Mammary epithelial cell (primary cell): ENCODE measurements at regions of chr5 and their contacts with region 1.

Region 1: GRCh38 chr5:66440202-66440680 is 156.0 kb upstream of the MAST4 start:
- DNase-seq: peak; percentile 53
- H3K4me3 ChIP-seq: no peak overlapping the region
- H3K27ac ChIP-seq: no peak overlapping the region
- H3K4me1 ChIP-seq: no peaks in the 10 kb centered on the region
- H3K27me3 ChIP-seq: peaks cover 2% of the 10 kb centered on the region
- CTCF ChIP-seq: no peak

Region 2: GRCh38 chr5:66378407-66378806 is 61.8 kb before region 1 on chr5:
- CTCF ChIA-PET with region 1: no interaction called
- dilution Hi-C with region 1: loop called (anchors 5 kb)
- in situ Hi-C with region 1: no loop called
- intact Hi-C with region 1: no loop called
- DNase-seq: no peak
- H3K4me3 ChIP-seq: no peak overlapping the region
- H3K27ac ChIP-seq: no peak overlapping the region
- H3K4me1 ChIP-seq: no peaks in the 10 kb centered on the region
- H3K27me3 ChIP-seq: no peaks in the 10 kb centered on the region
- CTCF ChIP-seq: no peak

Region 3: DNA sequence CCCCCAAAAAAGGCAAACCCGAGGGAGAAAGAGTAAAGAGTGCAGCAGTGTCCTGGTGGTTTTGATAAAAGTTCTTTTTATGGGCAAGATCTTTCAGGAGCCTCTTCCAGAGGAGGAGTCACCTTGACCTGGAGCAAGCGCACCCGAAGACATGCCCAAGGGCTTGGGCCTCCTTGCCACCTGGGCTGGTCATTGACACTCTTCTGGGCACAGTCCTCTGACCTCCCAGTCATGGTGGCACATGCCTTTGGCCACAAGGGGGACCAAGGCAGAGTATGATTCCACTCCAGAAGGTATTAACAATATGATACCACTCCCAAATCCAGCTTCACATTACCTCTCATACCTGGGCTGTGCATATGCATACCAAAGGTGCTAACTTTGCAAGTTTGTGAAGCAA is 240.5 kb after region 1 on chr5:
- CTCF ChIA-PET with region 1: no interaction called
- dilution Hi-C with region 1: no loop called
- in situ Hi-C with region 1: no loop called
- intact Hi-C with region 1: no loop called
- DNase-seq: no peak
- H3K4me3 ChIP-seq: no peak overlapping the region
- H3K27ac ChIP-seq: no peak overlapping the region
- H3K4me1 ChIP-seq: no peaks in the 10 kb centered on the region
- H3K27me3 ChIP-seq: no peaks in the 10 kb centered on the region
- CTCF ChIP-seq: no peak